PC-9 (cell line): ENCODE measurements at regions of chr6 and their contacts with region 1.

Region 1: GRCh38 chr6:31087494-31088089 is 24.8 kb downstream of the C6orf15 start:
- DNase-seq: peak; percentile 80 to 89
- H3K4me3 ChIP-seq: no peak overlapping the region
- H3K27ac ChIP-seq: 0 out of 2 replicates have a peak overlapping the region, but pooled peaks have one; percentile 2
- H3K4me1 ChIP-seq: peaks cover 12% of the 10 kb centered on the region
- H3K27me3 ChIP-seq: no peaks in the 10 kb centered on the region
- CTCF ChIP-seq: peak; percentile 90

Region 2: DNA sequence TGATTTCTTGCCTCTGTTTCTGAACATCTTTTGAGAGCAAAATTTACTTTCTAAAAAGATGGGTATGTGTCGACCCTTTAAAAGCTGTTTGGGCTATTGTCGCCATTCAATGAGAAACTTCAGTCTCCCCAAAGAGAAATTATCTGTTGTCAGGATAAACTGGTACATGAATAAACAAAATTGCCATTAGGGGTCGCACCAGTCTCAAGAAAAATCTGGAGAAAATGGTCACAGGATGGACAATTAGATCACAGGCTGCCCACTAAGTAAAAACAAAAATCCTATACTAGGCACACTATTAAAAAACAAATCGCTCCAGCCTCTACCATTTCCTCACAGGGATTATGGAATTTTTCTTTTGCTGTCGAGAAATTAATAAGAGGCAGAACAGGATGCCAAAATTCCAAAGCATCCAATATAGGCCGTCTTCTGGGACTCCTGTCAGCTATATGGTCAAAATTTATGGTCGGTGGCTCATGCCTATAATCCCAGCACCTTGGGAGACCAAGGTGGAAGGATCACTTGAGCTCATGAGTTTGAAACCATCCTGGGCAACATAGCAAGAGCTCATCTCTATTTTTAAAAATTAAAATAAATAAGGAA is 603.8 kb before region 1 on chr6:
- CTCF ChIA-PET with region 1: interaction called, 3 read pairs
- POLR2A ChIA-PET with region 1: no interaction called
- intact Hi-C with region 1: loop called (anchors 2 kb)
- DNase-seq: peak; percentile 45 to 56
- H3K4me3 ChIP-seq: no peak overlapping the region
- H3K27ac ChIP-seq: no peak overlapping the region
- H3K4me1 ChIP-seq: no peaks in the 10 kb centered on the region; the same call in 1 of the 2 replicates
- H3K27me3 ChIP-seq: peaks cover 30% of the 10 kb centered on the region
- CTCF ChIP-seq: peak; percentile 74

Region 3: GRCh38 chr6:30547454-30547853 is 540.1 kb before region 1 on chr6:
- CTCF ChIA-PET with region 1: interaction called, 15 read pairs
- POLR2A ChIA-PET with region 1: no interaction called
- intact Hi-C with region 1: loop called (anchors 5 kb)
- DNase-seq: no peak
- H3K4me3 ChIP-seq: no peak overlapping the region
- H3K27ac ChIP-seq: no peak overlapping the region
- H3K4me1 ChIP-seq: no peaks in the 10 kb centered on the region
- H3K27me3 ChIP-seq: no peaks in the 10 kb centered on the region
- CTCF ChIP-seq: no peak

Region 4: DNA sequence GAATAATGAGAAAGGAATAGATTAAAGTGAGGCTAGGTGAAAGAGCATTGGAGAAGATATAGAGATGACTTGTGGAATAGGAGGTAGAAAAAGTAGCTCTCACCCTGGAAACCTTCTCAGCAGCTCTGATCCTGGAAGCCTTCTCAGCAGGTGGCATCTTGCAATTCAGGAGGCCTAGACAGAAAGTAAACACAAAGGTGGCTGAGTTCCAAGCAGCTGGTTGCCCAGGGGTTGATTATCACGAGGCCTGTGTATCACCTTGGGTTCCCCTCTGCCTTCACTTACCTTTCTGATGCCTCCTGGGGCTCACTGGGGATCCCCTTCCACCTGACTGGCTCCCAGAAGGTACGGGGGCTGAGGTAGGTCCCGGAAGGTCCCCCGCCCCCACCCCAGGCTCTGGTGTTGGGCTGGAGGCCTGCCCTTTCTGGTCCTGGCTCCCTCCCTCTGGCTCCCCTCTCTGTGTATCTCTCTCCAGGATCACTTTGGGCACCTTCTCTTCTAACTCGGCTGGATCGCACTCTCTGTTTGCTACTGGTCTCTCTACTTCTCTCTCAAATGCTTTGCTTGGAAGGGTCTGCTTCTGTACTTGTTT is 380.2 kb before region 1 on chr6:
- CTCF ChIA-PET with region 1: interaction called, 19 read pairs
- POLR2A ChIA-PET with region 1: no interaction called
- intact Hi-C with region 1: no loop called
- DNase-seq: peak; percentile 53 to 56
- H3K4me3 ChIP-seq: no peak overlapping the region
- H3K27ac ChIP-seq: no peak overlapping the region
- H3K4me1 ChIP-seq: peaks cover 12% of the 10 kb centered on the region
- H3K27me3 ChIP-seq: no peaks in the 10 kb centered on the region
- CTCF ChIP-seq: no peak

Region 5: GRCh38 chr6:30742316-30743098 is 345.1 kb before region 1 on chr6 and contains the start of gene FLOT1:
- CTCF ChIA-PET with region 1: no interaction called
- POLR2A ChIA-PET with region 1: interaction called, 16 read pairs
- intact Hi-C with region 1: no loop called
- DNase-seq: peak; percentile 94 to 100
- H3K4me3 ChIP-seq: peak within 1 kb of the TSS; percentile 86
- H3K27ac ChIP-seq: peak within 1 kb of the TSS; percentile 93
- H3K4me1 ChIP-seq: peaks cover 59% of the 10 kb centered on the region
- H3K27me3 ChIP-seq: no peaks in the 10 kb centered on the region
- CTCF ChIP-seq: no peak
- total RNA-seq, gene FLOT1: 225 and 234 TPM in 2 replicates

Region 6: DNA sequence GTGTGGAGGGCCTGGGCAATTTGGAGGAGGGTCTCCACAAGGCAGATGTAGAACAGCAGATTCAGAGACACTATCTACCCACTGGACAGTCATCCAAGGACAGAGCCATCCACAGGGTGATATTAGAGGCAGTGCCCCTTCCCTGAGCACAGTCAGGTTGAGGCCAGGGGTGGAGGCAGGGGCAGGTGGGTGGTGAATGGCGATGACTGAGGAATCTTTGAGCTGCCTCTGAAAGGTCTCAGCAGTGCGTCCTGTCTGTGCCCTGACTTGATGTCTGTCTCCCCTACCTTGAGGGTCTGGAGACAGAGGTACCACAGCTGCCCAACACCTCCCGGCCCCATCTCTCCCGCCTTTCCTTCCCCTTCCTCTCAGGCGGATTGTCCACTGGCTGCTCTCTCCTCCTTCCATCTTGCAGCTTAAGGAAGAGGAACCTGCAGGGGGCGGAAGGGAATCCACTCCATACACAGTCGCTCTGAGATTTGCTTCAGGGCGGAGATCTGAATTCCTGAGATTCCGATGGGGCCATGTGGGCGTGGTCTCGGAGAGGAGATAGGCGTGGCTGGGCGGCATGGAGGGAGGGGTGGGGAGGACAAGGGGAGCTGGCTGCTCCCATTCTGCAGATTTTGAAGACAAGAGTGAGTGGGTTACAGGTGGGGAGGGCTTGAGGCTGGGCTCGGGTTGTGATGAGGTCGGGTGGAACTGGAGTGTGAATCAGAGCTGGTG is 145.1 kb before region 1 on chr6:
- CTCF ChIA-PET with region 1: interaction called, 6 read pairs
- POLR2A ChIA-PET with region 1: interaction called, 11 read pairs
- intact Hi-C with region 1: no loop called
- DNase-seq: peak; percentile 82 to 91
- H3K4me3 ChIP-seq: no peak overlapping the region
- H3K27ac ChIP-seq: no peak overlapping the region
- H3K4me1 ChIP-seq: peaks cover 8% of the 10 kb centered on the region; the same call in 1 of the 2 replicates
- H3K27me3 ChIP-seq: no peaks in the 10 kb centered on the region
- CTCF ChIP-seq: peak; percentile 80

Region 7: GRCh38 chr6:31114970-31115849 is 27.6 kb after region 1 on chr6:
- CTCF ChIA-PET with region 1: interaction called, 45 read pairs
- POLR2A ChIA-PET with region 1: interaction called, 15 read pairs
- intact Hi-C with region 1: loop called (anchors 1 kb)
- DNase-seq: peak; percentile 56 to 76
- H3K4me3 ChIP-seq: peak overlapping the region; percentile 58
- H3K27ac ChIP-seq: peak overlapping the region; percentile 95
- H3K4me1 ChIP-seq: peaks cover 43% of the 10 kb centered on the region
- H3K27me3 ChIP-seq: no peaks in the 10 kb centered on the region
- CTCF ChIP-seq: peak; percentile 55; the same call in 1 of the 2 replicates